Psoas muscle (tissue), 8 donors: ENCODE measurements at regions of chr2 and their contacts with region 1.

Region 1: DNA sequence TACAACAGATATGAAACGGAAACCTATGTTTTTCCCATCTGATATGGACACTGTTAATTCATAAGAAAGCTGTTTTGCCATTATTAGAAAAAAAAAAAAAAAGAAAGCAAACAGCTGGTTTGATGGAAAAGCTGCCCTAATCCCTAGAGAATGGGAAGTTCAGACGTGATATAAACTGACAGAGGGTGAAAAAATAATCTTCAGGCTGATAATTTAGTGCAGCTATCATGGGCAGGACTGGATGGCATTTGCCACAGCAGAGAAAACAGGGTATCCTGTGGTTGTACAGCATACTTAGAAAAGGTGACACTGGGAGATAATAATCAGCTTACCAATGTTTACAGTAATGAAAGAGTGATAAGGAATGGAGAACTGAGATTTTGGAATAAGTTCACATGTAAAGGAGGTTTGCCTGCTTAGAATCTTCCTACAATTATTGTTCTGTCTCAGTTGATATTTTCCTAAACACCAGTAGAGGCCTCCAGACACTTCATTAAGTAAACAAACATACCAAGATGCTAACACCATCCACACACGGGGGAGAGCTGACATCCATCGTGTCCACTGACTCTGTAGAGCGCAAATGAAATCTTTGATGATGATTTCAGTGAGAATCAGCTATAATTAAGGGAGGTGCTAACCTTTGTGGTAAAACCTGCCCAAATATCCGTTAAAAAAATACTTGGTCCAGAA is 211.6 kb upstream of the MMADHC start:
- DNase-seq: no peak
- ATAC-seq: peak in 3 of 4 donors; percentile 30 to 64 (median 54)
- H3K4me3 ChIP-seq: no peak overlapping the region
- H3K27ac ChIP-seq: no peak overlapping the region
- H3K4me1 ChIP-seq: no peaks in the 10 kb centered on the region
- H3K27me3 ChIP-seq: peaks cover 0 to 3% (median 0%) of the 10 kb centered on the region in 3 donors
- CTCF ChIP-seq: peak; percentile 43

Region 2: GRCh38 chr2:151238527-151239487 is 1439.6 kb after region 1 on chr2:
- intact Hi-C with region 1: loop called in 1 of 2 experiments (anchors 10 kb)
- DNase-seq: peak; percentile 49 to 57
- ATAC-seq: peak; percentile 68 to 90 (median 79)
- H3K4me3 ChIP-seq: no peak overlapping the region
- H3K27ac ChIP-seq: no peak overlapping the region
- H3K4me1 ChIP-seq: no peaks in the 10 kb centered on the region
- H3K27me3 ChIP-seq: no peaks in the 10 kb centered on the region
- CTCF ChIP-seq: peak; percentile 88